ENCODE measurements at regions of chr12 and their contacts with region 1.

Region 1: DNA sequence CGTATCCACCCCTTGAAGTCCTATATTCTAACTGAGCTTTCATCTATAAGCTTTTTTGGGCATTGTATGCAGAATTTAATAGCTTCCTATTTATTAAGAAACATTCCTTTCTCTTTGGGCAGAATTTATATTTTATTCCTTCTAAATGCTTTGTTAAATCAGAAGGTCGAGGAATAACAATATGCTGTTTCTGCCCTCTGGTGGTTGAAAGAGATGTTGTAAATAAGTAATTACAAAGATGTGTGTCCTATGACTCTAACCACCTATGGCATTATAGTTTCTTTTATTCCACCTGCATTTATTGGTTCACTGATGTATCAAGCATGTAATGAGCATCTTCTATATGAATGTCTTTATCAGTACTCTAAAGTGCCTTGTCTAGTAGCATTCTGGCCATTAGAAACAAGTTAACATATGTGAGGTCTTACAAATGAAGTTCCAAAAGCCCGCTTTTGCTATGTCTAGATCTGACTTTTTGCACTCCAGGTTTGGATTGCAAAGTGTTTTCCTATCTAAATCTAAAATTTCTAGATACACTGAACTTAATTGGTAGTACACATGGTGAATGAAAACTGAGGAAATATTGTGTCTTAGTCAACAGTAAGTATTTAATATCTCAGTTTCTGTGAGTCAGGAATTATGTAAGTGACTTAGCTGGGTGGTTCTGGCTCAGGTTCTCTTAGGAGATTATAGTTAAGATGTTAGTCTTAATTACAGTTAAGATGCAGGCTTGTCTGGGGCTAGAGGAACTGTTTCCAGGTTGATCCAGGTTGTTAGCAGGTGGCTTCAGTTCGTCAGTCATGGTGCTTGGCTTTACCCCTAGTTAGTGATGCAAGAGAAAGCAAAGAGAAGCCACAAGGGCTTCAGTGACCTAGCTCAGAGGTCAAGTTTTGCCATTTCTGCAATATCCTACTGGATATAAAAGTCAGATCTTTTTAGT is 57.5 kb downstream of the PLEKHA5 start:
- DNase-seq: no peak
- ATAC-seq: peak; percentile 28 to 53 (median 48)
- H3K4me3 ChIP-seq: peak overlapping the region in 1 of 12 donors; percentile 15
- H3K27ac ChIP-seq: peak overlapping the region in 11 of 12 donors; percentile 14 to 65 (median 49)
- H3K4me1 ChIP-seq: peaks cover 6 to 80% (median 39%) of the 10 kb centered on the region in 12 donors
- H3K27me3 ChIP-seq: no peaks in the 10 kb centered on the region
- CTCF ChIP-seq: peak; percentile 42 to 79 (median 68)
- POLR2A ChIP-seq: no peak

Region 2: GRCh38 chr12:18250313-18250916 is 936.6 kb before region 1 on chr12:
- intact Hi-C with region 1: loop called in 6 of 10 experiments (anchors 2 to 10 kb)
- DNase-seq: no peak
- ATAC-seq: peak in 1 of 4 donors; percentile 59
- H3K4me3 ChIP-seq: no peak overlapping the region
- H3K27ac ChIP-seq: no peak overlapping the region
- H3K4me1 ChIP-seq: no peaks in the 10 kb centered on the region
- H3K27me3 ChIP-seq: no peaks in the 10 kb centered on the region
- CTCF ChIP-seq: peak; percentile 41 to 77 (median 64)
- POLR2A ChIP-seq: no peak

Region 3: DNA sequence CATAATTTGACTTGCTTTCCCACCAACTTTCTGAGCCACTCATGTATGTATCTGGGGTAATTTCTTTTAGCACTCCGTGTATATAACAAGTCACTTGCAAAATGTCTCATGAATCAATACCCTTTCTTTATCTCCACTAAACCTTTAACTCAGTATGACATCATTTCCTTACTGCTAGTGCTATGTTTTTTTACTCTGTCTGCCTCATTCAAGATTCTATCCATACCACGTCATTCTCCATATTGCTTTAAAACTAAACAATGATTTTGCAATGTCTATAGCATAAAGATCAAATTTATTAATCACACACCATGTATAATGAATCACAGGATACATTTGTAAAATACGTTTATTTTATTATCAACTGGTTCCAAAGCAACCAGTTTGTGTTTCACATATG is 747.5 kb before region 1 on chr12:
- intact Hi-C with region 1: loop called in 5 of 10 experiments (anchors 5 to 10 kb)
- DNase-seq: no peak
- ATAC-seq: no peak
- H3K4me3 ChIP-seq: no peak overlapping the region
- H3K27ac ChIP-seq: no peak overlapping the region
- H3K4me1 ChIP-seq: no peaks in the 10 kb centered on the region
- H3K27me3 ChIP-seq: no peaks in the 10 kb centered on the region
- CTCF ChIP-seq: no peak
- POLR2A ChIP-seq: no peak

Region 4: GRCh38 chr12:18752280-18752920 is 434.6 kb before region 1 on chr12:
- intact Hi-C with region 1: loop called in 3 of 10 experiments (anchors 5 to 10 kb)
- DNase-seq: peak in 4 of 5 donors; percentile 44 to 68 (median 51)
- ATAC-seq: peak in 3 of 4 donors; percentile 34 to 69 (median 43)
- H3K4me3 ChIP-seq: no peak overlapping the region
- H3K27ac ChIP-seq: peak overlapping the region; percentile 37 to 95 (median 78)
- H3K4me1 ChIP-seq: peaks cover 3 to 57% (median 21%) of the 10 kb centered on the region in 12 donors
- H3K27me3 ChIP-seq: no peaks in the 10 kb centered on the region
- CTCF ChIP-seq: no peak
- POLR2A ChIP-seq: no peak

Region 5: GRCh38 chr12:18882690-18883089 is 304.3 kb before region 1 on chr12:
- intact Hi-C with region 1: loop called in 2 of 10 experiments (anchors 5 kb)
- DNase-seq: no peak
- ATAC-seq: peak in 1 of 4 donors; percentile 67
- H3K4me3 ChIP-seq: peak overlapping the region in 1 of 12 donors; percentile 11
- H3K27ac ChIP-seq: no peak overlapping the region
- H3K4me1 ChIP-seq: peaks cover 0 to 5% (median 0%) of the 10 kb centered on the region in 12 donors
- H3K27me3 ChIP-seq: no peaks in the 10 kb centered on the region
- CTCF ChIP-seq: peak in 3 of 12 donors; percentile 14 to 29 (median 24)
- POLR2A ChIP-seq: no peak

Region 6: GRCh38 chr12:18982226-18982949 is 204.6 kb before region 1 on chr12:
- intact Hi-C with region 1: no loop called
- DNase-seq: no peak
- ATAC-seq: no peak
- H3K4me3 ChIP-seq: no peak overlapping the region
- H3K27ac ChIP-seq: no peak overlapping the region
- H3K4me1 ChIP-seq: no peaks in the 10 kb centered on the region
- H3K27me3 ChIP-seq: no peaks in the 10 kb centered on the region
- CTCF ChIP-seq: no peak
- POLR2A ChIP-seq: no peak

Region 7: GRCh38 chr12:19129486-19130223 is 57.3 kb before region 1 on chr12 and contains the start of gene PLEKHA5:
- intact Hi-C with region 1: loop called in 8 of 10 experiments (anchors 2 to 10 kb)
- DNase-seq: peak; percentile 77 to 88 (median 79)
- ATAC-seq: peak; percentile 43 to 94 (median 86)
- H3K4me3 ChIP-seq: peak within 1 kb of the TSS; percentile 70 to 96 (median 92)
- H3K27ac ChIP-seq: peak within 1 kb of the TSS; percentile 87 to 96 (median 94)
- H3K4me1 ChIP-seq: peaks cover 0 to 16% (median 0%) of the 10 kb centered on the region in 12 donors
- H3K27me3 ChIP-seq: no peaks in the 10 kb centered on the region
- CTCF ChIP-seq: peak in 8 of 12 donors; percentile 8 to 45 (median 26)
- POLR2A ChIP-seq: peak in 1 of 2 donors; percentile 30
- total RNA-seq, gene PLEKHA5: 43.7 to 72.2 (median 58.7) TPM

Region 8: GRCh38 chr12:19288603-19289244 is 101.7 kb after region 1 on chr12:
- intact Hi-C with region 1: loop called in 6 of 10 experiments (anchors 10 kb)
- DNase-seq: no peak
- ATAC-seq: peak in 1 of 4 donors; percentile 56
- H3K4me3 ChIP-seq: no peak overlapping the region
- H3K27ac ChIP-seq: no peak overlapping the region
- H3K4me1 ChIP-seq: peaks cover 0 to 5% (median 0%) of the 10 kb centered on the region in 12 donors
- H3K27me3 ChIP-seq: no peaks in the 10 kb centered on the region
- CTCF ChIP-seq: peak; percentile 48 to 73 (median 67)
- POLR2A ChIP-seq: no peak

Region 9: GRCh38 chr12:19299765-19300164 is 112.8 kb after region 1 on chr12:
- intact Hi-C with region 1: no loop called
- DNase-seq: no peak
- ATAC-seq: no peak
- H3K4me3 ChIP-seq: no peak overlapping the region
- H3K27ac ChIP-seq: no peak overlapping the region
- H3K4me1 ChIP-seq: no peaks in the 10 kb centered on the region
- H3K27me3 ChIP-seq: no peaks in the 10 kb centered on the region
- CTCF ChIP-seq: no peak
- POLR2A ChIP-seq: no peak

Region 10: GRCh38 chr12:19323805-19324204 is 136.8 kb after region 1 on chr12:
- intact Hi-C with region 1: no loop called
- DNase-seq: no peak
- ATAC-seq: no peak
- H3K4me3 ChIP-seq: no peak overlapping the region
- H3K27ac ChIP-seq: no peak overlapping the region
- H3K4me1 ChIP-seq: peaks cover 0 to 13% (median 0%) of the 10 kb centered on the region in 12 donors
- H3K27me3 ChIP-seq: no peaks in the 10 kb centered on the region
- CTCF ChIP-seq: no peak
- POLR2A ChIP-seq: no peak